GM12878 (cell line): ENCODE measurements at regions of chr5 and their contacts with region 1.

Region 1: GRCh38 chr5:116681334-116682013 is 106.9 kb upstream of the SEMA6A start:
- DNase-seq: peak; percentile 86
- ATAC-seq: peak; percentile 98
- H3K4me3 ChIP-seq: 0 out of 2 replicates have a peak overlapping the region, but pooled peaks have one; percentile 14
- H3K27ac ChIP-seq: peak overlapping the region; percentile 84
- H3K4me1 ChIP-seq: peaks cover 20% of the 10 kb centered on the region
- H3K27me3 ChIP-seq: no peaks in the 10 kb centered on the region
- CTCF ChIP-seq: no peak
- EP300 ChIP-seq: peak; percentile 48 to 65; a peak in 2 of 4 replicates
- POLR2A ChIP-seq: 0 out of 2 replicates have a peak, but pooled peaks have one; percentile 33
- RAD21 ChIP-seq: no peak

Region 2: GRCh38 chr5:116420540-116420939 is 260.9 kb before region 1 on chr5:
- CTCF ChIA-PET with region 1: no interaction called
- POLR2A ChIA-PET with region 1: no interaction called
- RAD21 ChIA-PET with region 1: no interaction called
- SMC1A ChIA-PET with region 1: no interaction called
- in situ Hi-C with region 1: no loop called
- intact Hi-C with region 1: no loop called
- DNase-seq: no peak
- ATAC-seq: no peak
- H3K4me3 ChIP-seq: no peak overlapping the region
- H3K27ac ChIP-seq: no peak overlapping the region
- H3K4me1 ChIP-seq: no peaks in the 10 kb centered on the region
- H3K27me3 ChIP-seq: no peaks in the 10 kb centered on the region
- CTCF ChIP-seq: no peak
- EP300 ChIP-seq: no peak
- POLR2A ChIP-seq: no peak
- RAD21 ChIP-seq: no peak

Region 3: GRCh38 chr5:116652196-116652729 is 29.2 kb before region 1 on chr5:
- CTCF ChIA-PET with region 1: interaction called, 5 read pairs
- POLR2A ChIA-PET with region 1: interaction called, 12 read pairs
- RAD21 ChIA-PET with region 1: interaction called, 9 read pairs
- SMC1A ChIA-PET with region 1: interaction called, 394 read pairs
- in situ Hi-C with region 1: no loop called
- intact Hi-C with region 1: no loop called
- DNase-seq: peak; percentile 85
- ATAC-seq: peak; percentile 96
- H3K4me3 ChIP-seq: no peak overlapping the region
- H3K27ac ChIP-seq: no peak overlapping the region; the same call in 1 of the 2 replicates
- H3K4me1 ChIP-seq: peaks cover 12% of the 10 kb centered on the region
- H3K27me3 ChIP-seq: no peaks in the 10 kb centered on the region
- CTCF ChIP-seq: no peak
- EP300 ChIP-seq: peak; percentile 81 to 90; a peak in 3 of 4 replicates
- POLR2A ChIP-seq: no peak
- RAD21 ChIP-seq: no peak

Region 4: DNA sequence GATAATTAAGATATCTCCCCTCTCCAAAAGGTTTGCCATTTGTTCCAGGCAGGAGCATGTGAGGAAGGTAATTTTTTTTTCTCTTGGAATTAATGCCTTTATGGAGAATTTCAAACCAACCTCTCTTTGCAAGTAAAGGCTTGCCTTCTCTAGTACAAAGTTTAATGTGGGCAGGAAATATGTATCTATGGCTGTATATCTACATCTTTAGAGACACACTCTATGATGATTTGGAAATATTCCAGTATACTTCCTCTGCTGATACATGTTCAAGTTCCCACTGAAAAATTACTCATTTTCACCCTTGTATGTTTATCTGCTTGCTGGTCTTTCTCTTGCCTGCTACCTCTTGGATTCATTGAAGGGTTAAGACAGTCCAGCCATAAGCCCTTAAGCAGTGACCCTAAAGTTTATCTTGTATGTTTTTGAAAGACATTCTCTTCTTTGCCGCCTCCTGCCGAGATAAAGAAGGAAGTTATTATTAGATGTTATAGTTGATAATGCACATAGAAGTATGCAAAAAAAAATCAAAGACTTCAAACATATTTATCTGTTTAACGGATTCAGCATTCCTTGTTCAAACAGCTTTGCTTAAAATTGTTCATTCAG is 23.2 kb before region 1 on chr5:
- CTCF ChIA-PET with region 1: interaction called, 5 read pairs
- POLR2A ChIA-PET with region 1: interaction called, 14 read pairs
- RAD21 ChIA-PET with region 1: interaction called, 12 read pairs
- SMC1A ChIA-PET with region 1: interaction called, 394 read pairs
- in situ Hi-C with region 1: no loop called
- intact Hi-C with region 1: no loop called
- DNase-seq: no peak
- ATAC-seq: peak; percentile 52
- H3K4me3 ChIP-seq: no peak overlapping the region
- H3K27ac ChIP-seq: no peak overlapping the region
- H3K4me1 ChIP-seq: no peaks in the 10 kb centered on the region
- H3K27me3 ChIP-seq: no peaks in the 10 kb centered on the region
- CTCF ChIP-seq: no peak; a peak in 1 of 6 replicates
- EP300 ChIP-seq: no peak
- POLR2A ChIP-seq: no peak
- RAD21 ChIP-seq: no peak

Region 5: DNA sequence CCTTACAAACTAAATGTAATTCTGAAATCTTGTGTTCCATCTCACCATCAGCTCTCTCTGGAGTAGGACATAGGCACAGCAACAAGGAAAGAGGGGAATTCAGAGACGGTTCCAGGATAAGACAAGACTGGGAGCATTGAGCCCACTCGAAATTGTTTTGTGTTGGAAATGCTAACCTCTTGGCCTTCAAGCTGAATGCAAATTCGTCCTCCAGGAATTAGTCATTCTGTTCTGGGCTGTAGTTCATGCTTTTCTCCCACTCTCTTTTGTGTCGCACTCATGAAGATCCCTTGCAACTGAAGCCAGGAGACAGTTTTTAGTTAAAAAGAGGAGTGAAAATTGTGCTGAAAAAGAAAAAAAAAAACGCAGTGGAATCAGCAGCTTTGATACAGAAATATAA is 14.9 kb after region 1 on chr5:
- CTCF ChIA-PET with region 1: interaction called, 16 read pairs
- POLR2A ChIA-PET with region 1: interaction called, 4 read pairs
- RAD21 ChIA-PET with region 1: interaction called, 10 read pairs
- SMC1A ChIA-PET with region 1: interaction called, 21 read pairs
- in situ Hi-C with region 1: no loop called
- intact Hi-C with region 1: no loop called
- DNase-seq: no peak
- ATAC-seq: peak; percentile 87
- H3K4me3 ChIP-seq: no peak overlapping the region; the same call in 1 of the 2 replicates
- H3K27ac ChIP-seq: peak overlapping the region; percentile 11; the same call in 1 of the 2 replicates
- H3K4me1 ChIP-seq: peaks cover 25% of the 10 kb centered on the region
- H3K27me3 ChIP-seq: no peaks in the 10 kb centered on the region
- CTCF ChIP-seq: no peak
- EP300 ChIP-seq: peak; percentile 49 to 76; a peak in 2 of 4 replicates
- POLR2A ChIP-seq: no peak
- RAD21 ChIP-seq: peak; percentile 35; the same call in 1 of the 2 replicates

Region 6: DNA sequence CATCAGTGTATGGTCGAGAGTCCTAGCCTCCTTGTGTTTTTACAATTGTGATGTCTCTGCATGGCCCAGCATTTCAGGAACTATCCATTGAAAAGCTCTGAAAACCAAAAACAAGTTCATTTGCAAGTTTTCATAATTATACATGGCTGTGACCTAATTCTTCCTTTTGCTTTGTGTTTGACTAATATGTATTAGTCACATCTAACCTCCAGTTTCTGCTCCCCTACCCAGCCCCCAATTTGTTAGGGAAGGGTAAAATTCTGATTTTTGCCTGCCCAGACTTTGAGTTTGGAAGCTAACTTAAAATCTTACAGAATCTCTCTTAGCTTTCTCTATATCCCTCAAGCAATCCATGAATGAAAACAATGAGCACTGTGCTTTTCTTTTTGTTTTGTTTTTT is 21.3 kb after region 1 on chr5:
- CTCF ChIA-PET with region 1: interaction called, 6 read pairs
- POLR2A ChIA-PET with region 1: interaction called, 5 read pairs
- RAD21 ChIA-PET with region 1: interaction called, 45 read pairs
- SMC1A ChIA-PET with region 1: interaction called, 21 read pairs
- in situ Hi-C with region 1: no loop called
- intact Hi-C with region 1: loop called (anchors 2 kb)
- DNase-seq: no peak
- ATAC-seq: peak; percentile 72
- H3K4me3 ChIP-seq: no peak overlapping the region
- H3K27ac ChIP-seq: peak overlapping the region; percentile 31
- H3K4me1 ChIP-seq: peaks cover 26% of the 10 kb centered on the region
- H3K27me3 ChIP-seq: no peaks in the 10 kb centered on the region
- CTCF ChIP-seq: no peak
- EP300 ChIP-seq: peak in 1 of 2 experiments; percentile 66; a peak in 1 of 4 replicates
- POLR2A ChIP-seq: no peak
- RAD21 ChIP-seq: no peak

Region 7: DNA sequence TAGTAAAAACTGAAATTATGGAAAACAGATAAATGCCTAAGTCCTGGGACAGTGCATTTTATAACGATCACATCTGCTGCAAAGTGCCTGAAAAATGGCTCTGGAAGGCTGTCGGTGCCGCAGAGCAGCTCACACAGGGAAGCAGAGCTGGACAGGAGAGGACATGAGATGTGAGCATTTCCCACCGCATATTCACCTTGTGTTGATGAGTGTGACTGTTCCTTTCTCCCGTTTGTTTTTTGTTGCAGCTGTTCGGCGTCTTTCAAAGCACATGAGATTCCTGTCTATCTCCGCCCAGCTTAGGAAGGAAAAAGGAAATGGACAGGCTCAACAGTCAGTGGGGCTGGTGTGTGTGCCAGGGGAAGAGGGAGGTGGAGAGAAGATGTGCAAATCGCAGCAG is 58.1 kb after region 1 on chr5:
- CTCF ChIA-PET with region 1: no interaction called
- POLR2A ChIA-PET with region 1: no interaction called
- RAD21 ChIA-PET with region 1: no interaction called
- SMC1A ChIA-PET with region 1: no interaction called
- in situ Hi-C with region 1: no loop called
- intact Hi-C with region 1: no loop called
- DNase-seq: no peak
- ATAC-seq: no peak
- H3K4me3 ChIP-seq: no peak overlapping the region
- H3K27ac ChIP-seq: no peak overlapping the region
- H3K4me1 ChIP-seq: no peaks in the 10 kb centered on the region
- H3K27me3 ChIP-seq: no peaks in the 10 kb centered on the region
- CTCF ChIP-seq: no peak
- EP300 ChIP-seq: no peak
- POLR2A ChIP-seq: no peak
- RAD21 ChIP-seq: no peak

Region 8: GRCh38 chr5:116947691-116948528 is 266.4 kb after region 1 on chr5:
- CTCF ChIA-PET with region 1: no interaction called
- POLR2A ChIA-PET with region 1: no interaction called
- RAD21 ChIA-PET with region 1: interaction called, 4 read pairs
- SMC1A ChIA-PET with region 1: interaction called, 3 read pairs
- in situ Hi-C with region 1: no loop called
- intact Hi-C with region 1: loop called (anchors 5 kb)
- DNase-seq: peak; percentile 87
- ATAC-seq: peak; percentile 100
- H3K4me3 ChIP-seq: no peak overlapping the region
- H3K27ac ChIP-seq: no peak overlapping the region
- H3K4me1 ChIP-seq: peaks cover 3% of the 10 kb centered on the region
- H3K27me3 ChIP-seq: peaks cover 0 to 1% of the 10 kb centered on the region in 2 experiments; a peak in 1 of 4 replicates
- CTCF ChIP-seq: peak; percentile 88 to 94 (median 92)
- EP300 ChIP-seq: 0 out of 4 replicates have a peak, but pooled peaks of 1 of the 2 experiments have one; percentile 35
- POLR2A ChIP-seq: no peak
- RAD21 ChIP-seq: peak; percentile 98